Mammary epithelial cell (primary cell): ENCODE measurements at regions of chr6 and their contacts with region 1.

Region 1: GRCh38 chr6:73329201-73329600 is 24.9 kb downstream of the DPPA5 start:
- DNase-seq: no peak
- H3K4me3 ChIP-seq: no peak overlapping the region
- H3K27ac ChIP-seq: no peak overlapping the region
- H3K4me1 ChIP-seq: no peaks in the 10 kb centered on the region
- H3K27me3 ChIP-seq: peaks cover 2% of the 10 kb centered on the region
- CTCF ChIP-seq: no peak

Region 2: GRCh38 chr6:72411872-72412708 is 917.1 kb before region 1 on chr6:
- CTCF ChIA-PET with region 1: no interaction called
- dilution Hi-C with region 1: no loop called
- in situ Hi-C with region 1: loop called in 1 of 2 experiments (anchors 25 kb)
- intact Hi-C with region 1: loop called (anchors 2 kb)
- DNase-seq: peak; percentile 60
- H3K4me3 ChIP-seq: no peak overlapping the region
- H3K27ac ChIP-seq: no peak overlapping the region
- H3K4me1 ChIP-seq: no peaks in the 10 kb centered on the region
- H3K27me3 ChIP-seq: no peaks in the 10 kb centered on the region
- CTCF ChIP-seq: peak; percentile 100

Region 3: GRCh38 chr6:73129653-73130443 is 199.4 kb before region 1 on chr6:
- CTCF ChIA-PET with region 1: no interaction called
- dilution Hi-C with region 1: no loop called
- in situ Hi-C with region 1: no loop called
- intact Hi-C with region 1: loop called (anchors 2 kb)
- DNase-seq: peak; percentile 83
- H3K4me3 ChIP-seq: no peak overlapping the region
- H3K27ac ChIP-seq: no peak overlapping the region
- H3K4me1 ChIP-seq: peaks cover 18% of the 10 kb centered on the region
- H3K27me3 ChIP-seq: no peaks in the 10 kb centered on the region
- CTCF ChIP-seq: peak; percentile 100

Region 4: DNA sequence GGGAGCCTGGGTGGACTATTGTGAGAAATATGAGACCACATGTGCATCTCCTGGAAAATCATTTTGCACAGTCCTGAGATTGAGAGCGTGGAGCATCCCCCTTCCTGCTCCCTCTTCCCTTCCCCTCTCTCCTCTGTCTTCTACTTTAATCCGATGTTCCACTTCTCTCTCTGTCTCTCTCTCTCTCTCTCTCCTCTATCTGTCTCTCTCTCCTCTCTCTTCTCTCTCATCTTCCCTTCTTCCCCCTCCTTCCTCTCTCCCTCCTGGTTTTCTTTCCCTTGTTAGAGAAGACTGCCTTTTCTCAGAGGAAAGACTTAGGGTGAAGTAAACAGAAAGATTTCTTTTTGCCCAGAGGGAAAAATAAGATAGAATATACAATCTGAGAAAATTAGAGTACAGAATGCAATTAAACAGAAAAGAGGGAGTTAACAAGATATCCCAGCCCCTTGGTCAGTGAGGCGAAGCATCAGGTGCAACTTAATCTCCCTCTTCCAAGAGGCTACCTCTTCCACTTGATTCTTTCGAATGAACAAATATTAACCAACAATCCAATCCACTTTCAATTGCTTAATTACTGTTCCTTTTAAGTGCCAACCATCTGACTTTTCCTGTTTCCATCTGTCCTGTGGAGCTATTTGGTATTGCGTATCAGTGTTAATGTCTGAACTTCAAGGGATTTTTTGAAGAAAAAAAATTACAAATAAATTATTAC is 80.9 kb before region 1 on chr6:
- CTCF ChIA-PET with region 1: interaction called, 11 read pairs
- dilution Hi-C with region 1: no loop called
- in situ Hi-C with region 1: no loop called
- intact Hi-C with region 1: no loop called
- DNase-seq: no peak
- H3K4me3 ChIP-seq: no peak overlapping the region
- H3K27ac ChIP-seq: no peak overlapping the region
- H3K4me1 ChIP-seq: no peaks in the 10 kb centered on the region
- H3K27me3 ChIP-seq: no peaks in the 10 kb centered on the region
- CTCF ChIP-seq: no peak

Region 5: DNA sequence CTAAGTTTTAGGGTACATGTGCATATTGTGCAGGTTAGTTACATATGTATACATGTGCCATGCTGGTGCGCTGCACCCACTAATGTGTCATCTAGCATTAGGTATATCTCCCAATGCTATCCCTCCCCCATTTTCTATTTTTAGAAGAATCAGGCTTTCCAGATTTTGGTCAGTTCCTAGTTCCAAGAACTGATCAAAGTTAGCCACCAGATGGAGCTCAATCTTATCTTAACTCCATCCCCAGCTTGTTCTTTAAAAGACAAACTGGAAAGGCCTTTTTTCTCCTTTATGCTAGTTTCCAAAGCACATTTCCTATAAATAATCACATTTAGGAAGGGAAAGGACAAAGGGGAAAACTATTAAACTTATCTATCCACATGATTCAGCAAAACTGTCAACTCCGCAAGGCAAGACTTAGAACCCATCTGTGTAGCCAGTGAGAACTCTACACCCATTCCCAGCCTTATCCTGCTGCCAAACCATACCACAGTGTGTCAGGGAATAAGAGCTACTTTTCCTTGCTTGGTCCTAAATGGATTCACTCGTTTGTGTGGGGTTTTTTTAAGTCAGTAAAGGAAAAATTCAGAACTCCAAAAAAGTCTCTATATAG is 43.4 kb before region 1 on chr6:
- CTCF ChIA-PET with region 1: interaction called, 27 read pairs
- dilution Hi-C with region 1: no loop called
- in situ Hi-C with region 1: no loop called
- intact Hi-C with region 1: loop called (anchors 1 kb)
- DNase-seq: peak; percentile 30
- H3K4me3 ChIP-seq: no peak overlapping the region
- H3K27ac ChIP-seq: no peak overlapping the region
- H3K4me1 ChIP-seq: no peaks in the 10 kb centered on the region
- H3K27me3 ChIP-seq: no peaks in the 10 kb centered on the region
- CTCF ChIP-seq: peak; percentile 29 to 47

Region 6: DNA sequence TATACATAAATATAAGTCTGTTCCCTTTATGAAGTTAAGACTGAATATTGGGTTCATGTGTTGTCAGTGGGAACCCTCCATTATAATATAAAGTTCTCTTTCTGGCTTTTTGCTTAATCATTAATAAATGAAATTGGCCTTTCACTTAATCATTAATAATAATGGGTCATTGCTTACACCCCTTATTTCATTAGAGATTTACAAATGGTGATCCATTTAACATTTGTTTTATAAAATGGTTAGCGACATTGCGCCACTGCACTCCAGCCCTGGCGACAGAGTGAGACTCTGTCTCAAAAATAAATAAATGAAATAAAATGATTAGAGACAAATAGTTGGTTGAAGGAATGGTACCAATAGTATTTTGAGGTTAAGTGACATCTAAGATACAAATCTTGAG is 83.9 kb after region 1 on chr6:
- CTCF ChIA-PET with region 1: no interaction called
- dilution Hi-C with region 1: loop called (anchors 5 kb)
- in situ Hi-C with region 1: no loop called
- intact Hi-C with region 1: no loop called
- DNase-seq: no peak
- H3K4me3 ChIP-seq: no peak overlapping the region
- H3K27ac ChIP-seq: no peak overlapping the region
- H3K4me1 ChIP-seq: no peaks in the 10 kb centered on the region
- H3K27me3 ChIP-seq: no peaks in the 10 kb centered on the region
- CTCF ChIP-seq: no peak